WTC11 (cell line): ENCODE measurements at regions of chr17 and their contacts with region 1.

Region 1: GRCh38 chr17:82030470-82031302 is 792 bp upstream of the RAC3 start:
- DNase-seq: peak; percentile 91
- ATAC-seq: peak; percentile 50
- H3K4me3 Mint-ChIP-seq: peak overlapping the region; percentile 73
- H3K27ac Mint-ChIP-seq: no peak overlapping the region
- H3K4me1 Mint-ChIP-seq: peaks cover 14% of the 10 kb centered on the region
- H3K27me3 Mint-ChIP-seq: no peaks in the 10 kb centered on the region
- CTCF ChIP-seq: peak; percentile 85

Region 2: DNA sequence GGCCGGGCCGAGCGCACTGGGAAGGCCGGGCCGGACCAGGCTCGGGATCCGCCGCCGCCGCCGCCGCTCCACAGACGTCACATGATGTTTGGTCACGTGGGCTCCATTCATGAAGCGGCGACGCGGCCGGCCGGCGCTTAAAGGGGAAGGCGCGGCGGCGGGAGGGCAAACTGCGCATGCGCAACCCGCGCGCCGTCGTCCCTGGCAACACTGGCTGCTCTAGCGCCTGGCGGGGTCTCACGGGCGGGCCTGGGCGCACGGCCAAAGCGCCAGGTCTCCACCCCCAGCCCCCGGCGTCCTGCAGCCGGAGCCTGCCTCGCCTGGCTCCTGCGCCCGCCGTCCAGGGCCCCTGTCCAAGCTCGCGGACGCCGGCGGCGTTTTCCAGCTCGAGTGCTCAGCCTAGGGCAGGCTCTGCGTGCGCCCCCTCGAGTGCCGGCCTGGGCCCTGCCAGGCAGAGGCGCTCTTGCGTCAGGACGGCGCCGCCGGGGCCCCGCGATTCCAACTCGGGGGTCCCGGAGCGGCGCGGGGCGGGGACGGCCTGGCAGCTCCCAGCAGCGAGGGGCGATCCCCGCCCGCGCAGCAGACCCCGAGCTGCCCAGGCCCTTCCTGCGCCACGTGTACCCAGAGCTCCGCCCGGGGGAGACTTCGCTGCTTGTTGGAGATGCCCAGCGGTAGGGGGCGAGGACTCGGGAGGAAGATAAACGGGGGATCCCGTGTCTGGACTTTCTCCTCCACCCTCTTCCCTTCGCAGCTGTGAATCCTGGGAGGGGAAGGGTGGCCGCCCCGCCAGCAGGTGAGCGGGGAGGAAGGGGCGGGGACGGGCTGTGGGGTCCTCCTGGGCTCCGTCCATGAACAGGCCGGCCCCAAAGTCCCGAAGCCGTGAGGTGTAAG is 102.8 kb before region 1 on chr17 and contains the start of gene MAFG:
- CTCF ChIA-PET with region 1: interaction called, 21 read pairs
- POLR2A ChIA-PET with region 1: no interaction called
- DNase-seq: peak; percentile 90
- ATAC-seq: peak; percentile 43
- H3K4me3 Mint-ChIP-seq: peak within 1 kb of the TSS; percentile 75
- H3K27ac Mint-ChIP-seq: no peak within 1 kb of the TSS
- H3K4me1 Mint-ChIP-seq: peaks cover 27% of the 10 kb centered on the region
- H3K27me3 Mint-ChIP-seq: peaks cover 3% of the 10 kb centered on the region; the same call in 1 of the 2 replicates
- CTCF ChIP-seq: no peak
- total RNA-seq, gene MAFG: 24.2 to 29.8 TPM (median 24.3 TPM) in 3 replicates

Region 3: GRCh38 chr17:81991684-81992305 is 38.9 kb before region 1 on chr17:
- CTCF ChIA-PET with region 1: interaction called, 18 read pairs
- POLR2A ChIA-PET with region 1: no interaction called
- DNase-seq: peak; percentile 52
- ATAC-seq: peak; percentile 57
- H3K4me3 Mint-ChIP-seq: no peak overlapping the region
- H3K27ac Mint-ChIP-seq: 0 out of 2 replicates have a peak overlapping the region, but pooled peaks have one; percentile 41
- H3K4me1 Mint-ChIP-seq: peaks cover 21% of the 10 kb centered on the region
- H3K27me3 Mint-ChIP-seq: no peaks in the 10 kb centered on the region
- CTCF ChIP-seq: no peak

Region 4: GRCh38 chr17:82064433-82065192 is 33.9 kb after region 1 on chr17:
- CTCF ChIA-PET with region 1: interaction called, 19 read pairs
- POLR2A ChIA-PET with region 1: interaction called, 4 read pairs
- DNase-seq: no peak
- ATAC-seq: no peak; the same call in 1 of the 2 replicates
- H3K4me3 Mint-ChIP-seq: peak overlapping the region; percentile 67
- H3K27ac Mint-ChIP-seq: no peak overlapping the region
- H3K4me1 Mint-ChIP-seq: 0 out of 2 replicates have a peak, but pooled peaks cover 2% of the 10 kb centered on the region
- H3K27me3 Mint-ChIP-seq: no peaks in the 10 kb centered on the region; the same call in 1 of the 2 replicates
- CTCF ChIP-seq: no peak

Region 5: DNA sequence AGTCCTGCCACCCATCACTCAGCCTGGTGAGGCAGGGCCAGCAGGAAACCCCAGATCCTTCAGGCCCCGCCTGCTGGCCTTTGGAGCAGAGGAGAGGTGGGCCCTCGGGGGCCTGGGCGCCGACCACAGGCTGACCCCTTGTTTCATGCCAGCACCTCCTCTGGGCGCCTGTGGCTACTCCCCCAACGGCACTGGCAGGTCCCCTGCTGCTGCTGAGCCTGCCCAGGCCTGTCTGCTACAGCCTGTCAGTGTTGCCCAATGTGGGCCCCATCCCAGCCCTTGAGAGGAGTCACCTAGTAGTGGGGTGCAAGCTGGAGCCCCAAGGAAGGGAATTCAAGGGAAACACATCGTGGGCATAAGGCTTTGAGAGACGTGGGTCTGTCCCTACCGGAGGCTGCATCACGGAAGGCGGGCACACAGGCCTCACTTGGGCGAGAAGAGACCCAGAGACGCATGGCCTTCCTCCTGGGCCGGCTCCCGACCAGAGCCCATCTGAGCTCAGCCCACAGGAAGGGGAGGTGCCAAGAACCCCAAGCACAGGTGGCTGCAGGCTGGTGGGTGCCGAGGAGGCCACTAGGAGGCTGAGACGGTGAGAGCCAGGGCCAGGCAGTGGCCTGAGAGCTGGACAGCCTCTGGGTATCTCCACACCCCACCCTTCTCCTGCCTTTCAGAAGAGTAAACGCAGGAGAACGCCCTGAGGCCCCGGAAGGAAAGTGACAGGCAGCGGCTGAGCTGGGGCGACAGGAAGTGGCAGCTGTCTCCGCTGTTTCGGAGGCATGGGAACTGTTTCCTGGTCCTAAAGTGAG is 75.4 kb after region 1 on chr17:
- CTCF ChIA-PET with region 1: interaction called, 18 read pairs
- POLR2A ChIA-PET with region 1: interaction called, 3 read pairs
- DNase-seq: peak; percentile 77
- ATAC-seq: peak; percentile 83
- H3K4me3 Mint-ChIP-seq: no peak overlapping the region
- H3K27ac Mint-ChIP-seq: peak overlapping the region; percentile 53
- H3K4me1 Mint-ChIP-seq: peaks cover 44% of the 10 kb centered on the region
- H3K27me3 Mint-ChIP-seq: peaks cover 32% of the 10 kb centered on the region
- CTCF ChIP-seq: no peak

Region 6: DNA sequence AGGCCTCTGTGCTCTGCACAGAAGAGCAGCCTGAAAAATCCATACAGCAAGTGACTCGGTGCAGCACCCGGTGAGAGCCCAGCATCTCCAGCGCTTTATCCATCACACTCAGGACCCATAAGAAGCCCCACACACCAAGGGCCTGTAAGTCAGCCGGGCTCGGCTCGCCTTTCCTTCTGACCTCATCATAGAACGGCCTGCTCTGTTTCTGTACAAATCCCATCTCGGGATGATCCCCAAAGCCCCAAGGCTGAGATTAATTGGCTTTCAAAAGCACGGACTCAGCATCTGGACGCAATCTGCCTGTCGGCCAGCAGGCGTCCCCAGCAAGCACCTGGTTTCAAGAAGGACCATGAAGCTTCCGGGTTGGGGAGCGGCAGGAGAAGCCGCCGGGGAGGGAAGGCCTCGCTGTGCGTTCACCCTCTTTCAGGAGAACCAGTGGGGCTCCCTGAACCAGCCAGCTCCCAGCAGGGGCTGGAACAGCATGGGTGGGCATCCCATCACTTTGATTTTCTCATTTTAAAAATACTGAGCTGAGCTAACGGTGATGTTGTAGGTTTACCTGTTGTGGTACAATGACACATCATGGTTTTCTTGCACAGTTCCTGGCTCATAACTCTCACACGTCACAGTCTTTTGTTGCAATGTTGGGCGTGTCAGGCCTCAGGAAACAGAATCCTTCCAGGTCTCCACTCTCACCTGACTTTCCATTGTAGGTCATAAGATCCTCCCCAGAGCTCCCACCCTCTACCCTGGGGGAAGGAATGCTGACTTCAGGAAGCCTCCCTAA is 175.2 kb after region 1 on chr17:
- CTCF ChIA-PET with region 1: interaction called, 11 read pairs
- POLR2A ChIA-PET with region 1: no interaction called
- DNase-seq: peak; percentile 78
- ATAC-seq: peak; percentile 91
- H3K4me3 Mint-ChIP-seq: no peak overlapping the region
- H3K27ac Mint-ChIP-seq: no peak overlapping the region
- H3K4me1 Mint-ChIP-seq: peaks cover 10% of the 10 kb centered on the region
- H3K27me3 Mint-ChIP-seq: peaks cover 3% of the 10 kb centered on the region; the same call in 1 of the 2 replicates
- CTCF ChIP-seq: peak; percentile 70

Region 7: GRCh38 chr17:82283208-82283749 is 252.6 kb after region 1 on chr17:
- CTCF ChIA-PET with region 1: no interaction called
- POLR2A ChIA-PET with region 1: no interaction called
- DNase-seq: no peak
- ATAC-seq: no peak
- H3K4me3 Mint-ChIP-seq: no peak overlapping the region
- H3K27ac Mint-ChIP-seq: no peak overlapping the region
- H3K4me1 Mint-ChIP-seq: peaks cover 10% of the 10 kb centered on the region
- H3K27me3 Mint-ChIP-seq: peaks cover 9% of the 10 kb centered on the region
- CTCF ChIP-seq: no peak

Region 8: GRCh38 chr17:82494236-82495055 is 463.8 kb after region 1 on chr17:
- CTCF ChIA-PET with region 1: no interaction called
- POLR2A ChIA-PET with region 1: no interaction called
- DNase-seq: peak; percentile 90
- ATAC-seq: peak; percentile 88
- H3K4me3 Mint-ChIP-seq: peak overlapping the region; percentile 86
- H3K27ac Mint-ChIP-seq: peak overlapping the region; percentile 97
- H3K4me1 Mint-ChIP-seq: peaks cover 20% of the 10 kb centered on the region
- H3K27me3 Mint-ChIP-seq: peaks cover 39% of the 10 kb centered on the region
- CTCF ChIP-seq: peak; percentile 87